ENCODE measurements at regions of chr6 and their contacts with region 1.

Region 1: DNA sequence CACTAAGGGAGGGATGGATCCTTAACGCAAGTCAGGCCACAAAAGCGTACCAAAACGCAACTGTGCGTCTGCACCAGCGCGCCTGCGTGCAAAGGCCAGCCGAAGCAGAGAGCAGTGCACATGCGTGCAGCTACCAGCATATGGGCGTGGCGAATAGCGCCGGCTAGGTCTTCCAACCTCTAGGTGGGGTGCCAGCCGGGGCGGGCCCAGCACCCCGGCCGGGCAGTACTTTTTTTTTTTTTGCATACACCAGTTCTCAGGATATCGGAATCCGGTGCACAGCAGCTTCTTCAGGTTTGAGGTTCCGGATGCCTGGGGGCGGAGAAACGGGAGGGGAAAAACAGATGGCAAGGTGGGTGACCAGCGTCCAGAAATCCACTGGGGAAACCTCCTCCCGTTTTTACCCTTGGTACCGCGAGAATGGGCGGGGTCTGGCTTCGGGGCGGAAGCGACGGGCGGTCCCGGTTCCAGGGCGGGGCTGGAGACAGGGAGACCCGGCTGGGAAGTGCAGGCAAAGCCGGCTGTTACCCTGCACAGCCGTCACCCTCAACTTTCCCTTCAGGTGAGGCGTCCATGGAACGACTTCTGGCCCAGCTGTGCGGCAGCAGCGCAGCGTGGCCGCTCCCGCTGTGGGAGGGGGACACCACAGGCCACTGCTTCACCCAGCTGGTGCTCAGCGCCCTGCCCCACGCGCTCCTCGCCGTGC is at the start of gene ABCC10:
- DNase-seq: peak; percentile 89 to 98 (median 95)
- ATAC-seq: peak; percentile 97
- H3K4me3 ChIP-seq: peak within 1 kb of the TSS; percentile 77
- H3K4me3 Mint-ChIP-seq: peak within 1 kb of the TSS; percentile 89 to 98 (median 94)
- H3K27ac ChIP-seq: peak within 1 kb of the TSS; percentile 95
- H3K27ac Mint-ChIP-seq: peak within 1 kb of the TSS; percentile 93 to 100 (median 98)
- H3K4me1 ChIP-seq: peaks cover 11 to 12% of the 10 kb centered on the region in 2 donors
- H3K4me1 Mint-ChIP-seq: peaks cover 15 to 36% (median 27%) of the 10 kb centered on the region in 7 donors
- H3K27me3 ChIP-seq: no peaks in the 10 kb centered on the region
- H3K27me3 Mint-ChIP-seq: peaks cover 0 to under 1% (median 0%) of the 10 kb centered on the region in 5 donors
- total RNA-seq, gene ABCC10: 56.2 to 74.6 (median 60.4) TPM

Region 2: GRCh38 chr6:42879372-42880239 is 548.0 kb before region 1 on chr6 and contains the start of gene RPL7L1:
- CTCF ChIA-PET with region 1: no interaction called
- POLR2A ChIA-PET with region 1: no interaction called
- intact Hi-C with region 1: loop called in 1 of 2 experiments (anchors 1 kb)
- DNase-seq: peak; percentile 70 to 93 (median 88)
- ATAC-seq: peak; percentile 95
- H3K4me3 ChIP-seq: peak within 1 kb of the TSS; percentile 82
- H3K4me3 Mint-ChIP-seq: peak within 1 kb of the TSS; percentile 93 to 99 (median 96)
- H3K27ac ChIP-seq: peak within 1 kb of the TSS; percentile 89
- H3K27ac Mint-ChIP-seq: peak within 1 kb of the TSS; percentile 98 to 100 (median 99)
- H3K4me1 ChIP-seq: peaks cover 5 to 7% of the 10 kb centered on the region in 2 donors
- H3K4me1 Mint-ChIP-seq: peaks cover 7 to 40% (median 29%) of the 10 kb centered on the region in 7 donors
- H3K27me3 ChIP-seq: no peaks in the 10 kb centered on the region
- H3K27me3 Mint-ChIP-seq: no peaks in the 10 kb centered on the region
- total RNA-seq, gene RPL7L1: 65.6 to 91.7 (median 78.1) TPM

Region 3: DNA sequence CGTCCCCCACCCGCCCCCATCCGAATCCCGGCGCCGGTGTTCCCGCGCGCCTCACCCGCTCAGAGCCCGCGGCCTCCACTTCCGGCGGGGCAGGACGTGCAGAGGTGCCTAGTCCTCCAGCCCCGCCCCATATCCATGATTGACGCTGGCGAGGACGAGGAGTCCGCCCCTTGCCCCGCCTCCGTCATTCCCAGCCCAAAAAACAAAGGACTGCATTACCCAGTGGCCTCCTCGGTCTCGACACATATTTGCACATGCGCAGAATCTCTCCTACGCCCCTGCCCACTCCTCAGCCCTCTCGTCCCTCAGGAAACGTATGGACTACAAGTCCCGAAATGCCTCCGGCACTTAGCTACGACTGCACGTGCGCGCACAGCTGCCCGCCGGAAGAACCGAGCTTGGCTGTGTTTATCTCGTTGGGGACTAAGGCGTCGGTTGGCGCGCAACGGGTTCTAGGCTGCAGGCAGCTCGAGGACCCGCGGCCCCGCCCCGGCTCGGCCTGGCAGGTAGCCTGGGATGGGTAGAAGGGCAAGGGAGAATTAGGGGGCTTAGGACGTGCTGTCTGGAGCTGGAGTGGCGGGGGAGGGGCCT is 413.6 kb before region 1 on chr6 and contains the starts of genes KLHDC3 and MEA1:
- CTCF ChIA-PET with region 1: no interaction called
- POLR2A ChIA-PET with region 1: no interaction called
- intact Hi-C with region 1: loop called in 1 of 2 experiments (anchors 1 kb)
- DNase-seq: peak; percentile 83 to 100 (median 99)
- ATAC-seq: peak; percentile 98
- H3K4me3 ChIP-seq: peak within 1 kb of the TSS; percentile 73
- H3K4me3 Mint-ChIP-seq: peak within 1 kb of the TSS; percentile 85 to 99 (median 92)
- H3K27ac ChIP-seq: peak within 1 kb of the TSS; percentile 84
- H3K27ac Mint-ChIP-seq: peak within 1 kb of the TSS; percentile 82 to 97 (median 92)
- H3K4me1 ChIP-seq: peaks cover 20 to 31% of the 10 kb centered on the region in 2 donors
- H3K4me1 Mint-ChIP-seq: peaks cover 45 to 78% (median 58%) of the 10 kb centered on the region in 7 donors
- H3K27me3 ChIP-seq: no peaks in the 10 kb centered on the region
- H3K27me3 Mint-ChIP-seq: peaks cover 0 to 3% (median 0%) of the 10 kb centered on the region in 5 donors
- total RNA-seq, gene KLHDC3: 39.9 to 76.9 (median 67.4) TPM
- total RNA-seq, gene MEA1: 20.3 to 58.0 (median 32.7) TPM

Region 4: DNA sequence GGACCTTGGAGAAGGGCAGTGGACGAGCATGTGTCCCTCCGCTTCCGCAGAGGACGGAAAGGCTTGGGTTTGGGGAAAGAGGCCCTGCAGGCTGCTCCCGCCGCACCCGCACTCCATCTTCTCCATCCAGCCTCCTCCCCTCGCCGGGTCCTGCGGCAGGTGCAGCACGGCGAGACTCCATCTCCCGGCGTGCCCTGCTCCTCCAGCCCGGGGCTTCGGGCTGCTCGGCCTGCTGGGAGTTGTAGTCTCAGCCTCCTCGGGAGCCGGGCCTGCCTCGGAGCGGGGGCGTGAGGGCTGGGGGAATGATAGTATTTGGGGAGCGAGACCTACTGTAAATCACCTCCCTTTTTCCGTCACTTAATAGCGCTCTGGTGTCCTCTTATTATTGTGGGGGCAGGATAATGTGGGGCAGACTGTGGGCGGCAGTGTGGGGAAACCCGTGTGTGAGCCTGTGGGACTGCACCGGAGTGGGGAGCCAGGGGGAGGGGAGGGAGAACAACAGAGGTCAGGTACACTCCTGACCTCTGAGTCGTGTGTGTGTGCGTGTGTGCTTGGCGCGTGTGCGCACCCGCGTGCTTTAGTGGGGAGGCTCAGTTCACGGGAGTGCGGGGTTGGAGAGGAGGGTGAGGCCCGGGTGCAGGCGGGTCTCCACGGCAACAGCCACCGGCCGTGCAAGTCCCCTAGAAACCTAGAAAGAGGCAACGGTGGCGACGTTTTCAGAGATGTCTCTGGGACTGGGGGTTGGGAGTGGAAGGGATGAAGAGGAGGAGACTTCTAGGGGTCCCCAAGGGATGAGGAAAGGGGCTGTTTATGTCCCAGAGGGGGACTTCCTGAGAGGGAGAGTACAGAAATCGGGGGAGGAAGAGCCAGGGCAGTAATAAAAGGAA is 180.2 kb before region 1 on chr6:
- CTCF ChIA-PET with region 1: no interaction called
- POLR2A ChIA-PET with region 1: no interaction called
- intact Hi-C with region 1: loop called in 1 of 2 experiments (anchors 1 kb)
- DNase-seq: peak; percentile 65 to 81 (median 78)
- ATAC-seq: peak; percentile 95
- H3K4me3 ChIP-seq: peak overlapping the region; percentile 84
- H3K4me3 Mint-ChIP-seq: peak overlapping the region in 9 of 10 donors; percentile 83 to 94 (median 88)
- H3K27ac ChIP-seq: peak overlapping the region; percentile 78
- H3K27ac Mint-ChIP-seq: peak overlapping the region; percentile 76 to 92 (median 89)
- H3K4me1 ChIP-seq: peaks cover 3 to 13% of the 10 kb centered on the region in 2 donors
- H3K4me1 Mint-ChIP-seq: peaks cover 11 to 26% (median 21%) of the 10 kb centered on the region in 7 donors
- H3K27me3 ChIP-seq: peaks cover 3 to 13% of the 10 kb centered on the region in 2 donors
- H3K27me3 Mint-ChIP-seq: peaks cover 7 to 33% (median 14%) of the 10 kb centered on the region in 5 donors

Region 5: GRCh38 chr6:43454696-43455530 is 27.4 kb after region 1 on chr6:
- CTCF ChIA-PET with region 1: no interaction called
- POLR2A ChIA-PET with region 1: interaction called, 6 read pairs
- intact Hi-C with region 1: loop called (anchors 1 kb)
- DNase-seq: peak in 7 of 9 donors; percentile 28 to 42 (median 31)
- ATAC-seq: peak; percentile 61
- H3K4me3 ChIP-seq: peak overlapping the region; percentile 69
- H3K4me3 Mint-ChIP-seq: peak overlapping the region; percentile 71 to 92 (median 85)
- H3K27ac ChIP-seq: peak overlapping the region; percentile 63
- H3K27ac Mint-ChIP-seq: peak overlapping the region in 7 of 9 donors; percentile 34 to 91 (median 70)
- H3K4me1 ChIP-seq: peaks cover 6 to 7% of the 10 kb centered on the region in 2 donors
- H3K4me1 Mint-ChIP-seq: peaks cover 10 to 19% (median 12%) of the 10 kb centered on the region in 7 donors
- H3K27me3 ChIP-seq: no peaks in the 10 kb centered on the region
- H3K27me3 Mint-ChIP-seq: peaks cover 0 to 34% (median 0%) of the 10 kb centered on the region in 5 donors

Region 6: DNA sequence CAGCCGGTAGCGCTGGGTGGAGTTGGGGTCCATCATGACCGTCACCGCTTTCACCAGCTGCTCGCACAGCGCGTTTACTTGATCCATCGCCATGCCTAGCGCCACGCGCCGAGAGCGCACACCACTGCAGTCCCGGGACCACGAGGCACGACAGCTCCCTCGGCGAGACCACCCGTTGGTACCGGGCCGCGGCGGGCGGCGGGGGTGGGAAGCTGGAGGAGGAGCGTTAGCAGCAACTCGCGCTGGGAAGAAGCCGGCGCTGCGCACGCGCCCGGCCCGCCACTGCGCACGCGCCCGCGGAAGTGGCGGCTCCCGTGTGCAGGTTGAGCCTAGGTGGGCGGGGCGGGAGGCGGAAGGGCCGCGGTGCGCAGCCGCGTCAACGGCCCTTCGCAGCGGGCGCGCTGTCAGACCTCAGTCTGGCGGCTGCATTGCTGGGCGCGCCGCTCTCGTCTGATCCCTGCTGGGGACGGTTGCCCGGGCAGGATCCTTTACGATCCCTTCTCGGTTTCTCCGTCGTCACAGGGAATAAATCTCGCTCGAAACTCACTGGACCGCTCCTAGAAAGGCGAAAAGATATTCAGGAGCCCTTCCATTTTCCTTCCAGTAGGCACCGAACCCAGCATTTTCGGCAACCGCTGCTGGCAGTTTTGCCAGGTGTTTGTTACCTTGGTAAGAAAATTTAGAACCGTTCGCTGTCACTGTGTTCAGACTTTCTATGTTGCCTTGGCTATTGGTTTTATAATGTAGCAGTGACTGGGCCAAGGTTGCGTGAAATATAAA is 148.4 kb after region 1 on chr6 and contains the starts of genes POLH and XPO5:
- CTCF ChIA-PET with region 1: no interaction called
- POLR2A ChIA-PET with region 1: interaction called, 3 read pairs
- intact Hi-C with region 1: loop called in 1 of 2 experiments (anchors 1 kb)
- DNase-seq: peak; percentile 83 to 94 (median 88)
- ATAC-seq: peak; percentile 99
- H3K4me3 ChIP-seq: peak within 1 kb of the TSS; percentile 77
- H3K4me3 Mint-ChIP-seq: peak within 1 kb of the TSS; percentile 90 to 100 (median 98)
- H3K27ac ChIP-seq: peak within 1 kb of the TSS; percentile 89
- H3K27ac Mint-ChIP-seq: peak within 1 kb of the TSS; percentile 78 to 94 (median 92)
- H3K4me1 ChIP-seq: peaks cover 20 to 21% of the 10 kb centered on the region in 2 donors
- H3K4me1 Mint-ChIP-seq: peaks cover 21 to 61% (median 40%) of the 10 kb centered on the region in 7 donors
- H3K27me3 ChIP-seq: no peaks in the 10 kb centered on the region
- H3K27me3 Mint-ChIP-seq: no peaks in the 10 kb centered on the region
- total RNA-seq, gene POLH: 9.1 to 65.6 (median 19.3) TPM
- total RNA-seq, gene XPO5: 35.0 to 107 (median 41.9) TPM

Region 7: GRCh38 chr6:43667245-43668150 is 239.9 kb after region 1 on chr6:
- CTCF ChIA-PET with region 1: no interaction called
- POLR2A ChIA-PET with region 1: no interaction called
- intact Hi-C with region 1: no loop called
- DNase-seq: peak; percentile 63 to 85 (median 77)
- ATAC-seq: peak; percentile 87
- H3K4me3 ChIP-seq: no peak overlapping the region
- H3K4me3 Mint-ChIP-seq: peak overlapping the region in 9 of 10 donors; percentile 23 to 79 (median 64)
- H3K27ac ChIP-seq: peak overlapping the region; percentile 10
- H3K27ac Mint-ChIP-seq: peak overlapping the region in 7 of 9 donors; percentile 22 to 89 (median 68)
- H3K4me1 ChIP-seq: peaks cover 8 to 9% of the 10 kb centered on the region in 2 donors
- H3K4me1 Mint-ChIP-seq: peaks cover 14 to 45% (median 18%) of the 10 kb centered on the region in 7 donors
- H3K27me3 ChIP-seq: no peaks in the 10 kb centered on the region
- H3K27me3 Mint-ChIP-seq: no peaks in the 10 kb centered on the region